Activated CD8-positive, alpha-beta T cell treated with anti-CD3 and anti-CD28 coated beads for 36 hours (primary cell): ENCODE measurements at regions of chr11 and their contacts with region 1.

Region 1: DNA sequence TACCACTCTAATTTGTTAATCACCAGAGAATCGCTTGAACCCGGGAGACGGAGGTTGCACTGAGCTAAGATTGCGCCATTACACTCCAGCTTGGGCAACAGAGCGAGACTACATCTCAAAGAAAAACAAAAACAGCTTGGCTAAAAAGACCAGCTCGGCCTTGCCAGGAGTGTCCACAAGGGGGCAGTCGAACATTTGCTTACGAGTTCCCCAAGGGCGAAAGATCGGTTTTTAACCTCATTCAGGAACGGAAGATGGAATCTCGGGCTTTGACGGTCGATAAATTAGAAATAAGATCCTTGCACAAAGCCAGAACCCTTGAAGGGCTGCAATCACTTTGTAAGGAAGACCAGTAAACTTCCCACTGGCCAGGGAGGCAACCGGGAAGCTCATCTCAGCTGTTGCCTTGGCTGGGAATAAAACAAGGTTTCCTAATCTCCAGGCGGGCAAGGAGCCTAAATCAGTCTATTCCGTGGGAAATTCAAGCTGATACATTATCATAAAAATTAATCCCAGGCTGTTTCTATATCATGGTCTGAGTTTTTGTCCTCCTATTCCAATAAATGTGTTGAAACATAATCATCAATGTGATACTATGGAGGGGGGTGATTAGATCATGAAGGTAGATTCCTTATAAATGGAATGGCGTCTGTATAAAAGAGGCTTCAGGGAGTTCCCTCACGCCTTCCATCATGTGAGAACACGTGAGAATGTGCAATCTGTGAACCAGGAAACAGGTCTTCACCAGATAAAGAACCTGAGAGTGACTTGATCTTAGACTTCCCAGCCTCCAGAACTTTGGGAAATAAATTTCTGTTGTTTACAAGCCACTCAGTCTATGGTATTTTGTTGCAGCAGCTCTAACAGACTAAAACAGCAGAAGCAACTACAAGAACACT is 14.9 kb upstream of the SLC29A2 start:
- DNase-seq: peak; percentile 95
- ATAC-seq: peak; percentile 80
- H3K4me3 Mint-ChIP-seq: peak overlapping the region; percentile 18
- H3K27ac Mint-ChIP-seq: no peak overlapping the region
- H3K4me1 Mint-ChIP-seq: peaks cover 4% of the 10 kb centered on the region
- H3K27me3 Mint-ChIP-seq: no peaks in the 10 kb centered on the region
- CTCF ChIP-seq: peak; percentile 87

Region 2: GRCh38 chr11:66268283-66268951 is 118.0 kb before region 1 on chr11 and contains the start of gene RAB1B:
- CTCF ChIA-PET with region 1: no interaction called
- POLR2A ChIA-PET with region 1: no interaction called
- intact Hi-C with region 1: no loop called
- DNase-seq: peak; percentile 100
- ATAC-seq: peak; percentile 87
- H3K4me3 Mint-ChIP-seq: peak within 1 kb of the TSS; percentile 91
- H3K27ac Mint-ChIP-seq: peak within 1 kb of the TSS; percentile 98
- H3K4me1 Mint-ChIP-seq: peaks cover 29% of the 10 kb centered on the region
- H3K27me3 Mint-ChIP-seq: no peaks in the 10 kb centered on the region
- CTCF ChIP-seq: no peak
- total RNA-seq, gene RAB1B: 97.9 to 98.2 TPM

Region 3: DNA sequence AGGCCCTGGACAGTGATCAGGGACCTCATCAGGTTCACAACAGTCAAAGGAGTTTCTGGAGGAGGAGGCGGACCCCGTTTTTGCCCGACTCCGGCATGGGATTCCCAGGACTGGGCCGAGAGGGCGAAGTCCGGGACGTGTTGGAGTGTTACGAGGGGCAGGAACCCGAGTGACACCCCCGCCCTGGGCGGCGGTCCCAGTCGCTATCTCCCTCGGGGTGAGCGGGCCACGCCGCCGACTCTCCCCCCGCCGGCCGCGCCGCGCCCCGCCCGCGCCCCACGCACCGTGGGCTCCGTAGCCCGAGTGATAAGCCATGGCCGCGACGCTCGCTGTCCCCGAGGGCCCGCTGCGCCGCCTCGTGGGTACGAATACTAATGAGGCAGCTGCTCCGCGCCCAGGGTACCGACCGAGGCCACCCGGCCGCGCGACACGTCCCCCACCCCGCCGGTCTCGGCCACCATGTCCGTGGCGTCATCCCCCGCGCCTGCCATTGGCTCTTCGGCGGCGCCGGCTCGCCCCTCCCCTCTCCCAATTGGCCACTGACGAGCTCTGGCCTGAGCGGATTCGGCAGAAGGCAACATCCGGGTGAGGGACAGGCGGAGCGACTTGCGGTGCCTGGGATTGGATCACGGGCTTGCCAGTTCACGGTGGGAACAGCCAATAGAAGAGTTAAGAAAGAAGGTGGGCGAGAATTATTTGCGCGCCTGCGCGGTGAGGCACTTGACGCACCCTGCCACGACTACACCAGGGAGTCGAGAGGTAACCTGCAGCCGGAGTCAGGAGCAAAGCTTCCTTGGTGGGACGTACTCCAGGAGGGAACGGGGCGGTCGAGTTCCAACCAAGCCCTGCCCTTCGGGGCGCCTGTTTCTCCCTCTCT is 97.5 kb before region 1 on chr11 and contains the start of gene YIF1A:
- CTCF ChIA-PET with region 1: interaction called, 14 read pairs
- POLR2A ChIA-PET with region 1: no interaction called
- intact Hi-C with region 1: no loop called
- DNase-seq: peak; percentile 99
- ATAC-seq: peak; percentile 96
- H3K4me3 Mint-ChIP-seq: peak within 1 kb of the TSS; percentile 85
- H3K27ac Mint-ChIP-seq: peak within 1 kb of the TSS; percentile 89
- H3K4me1 Mint-ChIP-seq: peaks cover 31% of the 10 kb centered on the region
- H3K27me3 Mint-ChIP-seq: peaks cover 17% of the 10 kb centered on the region
- CTCF ChIP-seq: no peak
- total RNA-seq, gene YIF1A: 57.4 to 64.0 TPM

Region 4: DNA sequence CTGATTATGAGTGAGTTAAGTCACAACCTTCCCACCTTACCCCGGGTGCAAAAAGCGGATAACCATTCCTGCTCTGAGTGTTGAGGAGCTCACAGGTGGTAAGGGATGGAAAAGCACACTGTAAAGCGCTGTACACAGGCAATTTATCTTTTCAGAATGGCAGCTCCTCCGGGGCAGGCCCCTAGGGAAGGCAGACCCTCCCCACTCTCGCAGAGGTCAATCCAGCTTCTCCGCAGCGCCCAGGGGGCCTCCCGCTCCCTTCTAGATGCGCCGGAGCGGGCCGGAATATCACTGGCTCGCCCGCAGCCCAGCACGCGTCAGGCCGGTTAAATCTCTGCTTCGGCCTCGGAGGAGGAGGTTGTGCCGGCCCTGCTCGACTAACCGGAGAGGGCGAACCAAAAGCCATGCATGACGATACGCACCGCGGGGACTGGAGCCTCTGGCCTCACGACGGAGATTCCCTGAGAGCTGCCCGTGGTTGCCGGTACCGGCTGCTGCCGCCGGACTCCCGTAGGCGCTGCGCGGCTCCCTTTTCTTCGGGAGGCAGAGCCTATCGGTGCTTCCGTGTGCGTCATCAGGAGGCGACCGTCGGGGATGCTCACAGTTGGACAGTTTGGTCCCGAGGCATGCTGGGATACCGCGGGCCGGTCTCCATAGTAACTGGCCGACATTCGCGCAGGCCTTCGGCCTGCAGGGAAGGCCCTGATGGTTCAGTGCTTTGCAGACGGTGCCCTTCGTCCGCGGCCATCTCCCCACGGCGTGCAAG is 41.7 kb before region 1 on chr11 and contains the start of gene BRMS1:
- CTCF ChIA-PET with region 1: interaction called, 22 read pairs
- POLR2A ChIA-PET with region 1: interaction called, 4 read pairs
- intact Hi-C with region 1: no loop called
- DNase-seq: peak; percentile 99
- ATAC-seq: peak; percentile 78
- H3K4me3 Mint-ChIP-seq: peak within 1 kb of the TSS; percentile 95
- H3K27ac Mint-ChIP-seq: peak within 1 kb of the TSS; percentile 92
- H3K4me1 Mint-ChIP-seq: peaks cover 43% of the 10 kb centered on the region
- H3K27me3 Mint-ChIP-seq: peaks cover 2% of the 10 kb centered on the region
- CTCF ChIP-seq: peak; percentile 14
- total RNA-seq, gene BRMS1: 35.7 to 35.9 TPM

Region 5: GRCh38 chr11:66371627-66372415 is 14.6 kb before region 1 on chr11 and contains the start of gene SLC29A2:
- CTCF ChIA-PET with region 1: interaction called, 84 read pairs
- POLR2A ChIA-PET with region 1: interaction called, 5 read pairs
- intact Hi-C with region 1: no loop called
- DNase-seq: peak; percentile 91
- ATAC-seq: peak; percentile 91
- H3K4me3 Mint-ChIP-seq: peak within 1 kb of the TSS; percentile 85
- H3K27ac Mint-ChIP-seq: peak within 1 kb of the TSS; percentile 90
- H3K4me1 Mint-ChIP-seq: peaks cover 24% of the 10 kb centered on the region
- H3K27me3 Mint-ChIP-seq: no peaks in the 10 kb centered on the region
- CTCF ChIP-seq: no peak
- total RNA-seq, gene SLC29A2: 11.8 to 12.2 TPM

Region 6: DNA sequence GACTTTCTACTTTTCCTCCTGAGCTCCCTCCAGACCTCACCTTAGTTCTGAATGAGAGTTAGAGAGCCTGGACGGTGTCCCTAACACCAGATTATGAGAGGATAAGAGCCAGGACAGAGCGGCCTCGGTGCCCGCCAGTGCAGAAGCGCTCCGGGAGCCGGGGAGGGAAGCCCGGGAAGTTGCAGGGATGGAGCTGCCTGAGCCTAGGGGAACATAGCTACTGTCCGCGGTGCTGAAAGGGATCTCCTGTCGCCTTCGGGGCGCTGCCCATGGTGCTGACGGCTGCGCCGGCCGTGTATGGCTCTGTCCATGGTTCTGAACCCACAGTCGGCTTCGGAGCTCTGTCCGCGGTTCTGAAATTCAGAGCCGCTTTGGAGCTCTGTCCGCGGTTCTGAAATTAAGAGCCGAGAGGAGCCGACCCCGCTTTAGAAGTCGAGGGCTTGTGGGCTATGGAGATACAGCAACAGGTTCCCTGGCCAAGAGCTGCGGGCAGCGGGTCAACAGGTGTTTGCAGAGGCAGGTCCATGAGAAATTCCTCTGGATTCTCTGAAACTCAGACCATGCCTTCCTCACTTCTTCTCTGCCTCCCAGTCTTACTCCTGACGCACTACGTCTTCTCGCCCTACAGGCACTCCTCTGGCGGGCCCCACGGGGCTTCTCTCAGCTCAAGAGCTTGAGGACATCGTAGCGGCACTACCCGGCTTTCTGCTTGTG is 35.2 kb after region 1 on chr11:
- CTCF ChIA-PET with region 1: interaction called, 22 read pairs
- POLR2A ChIA-PET with region 1: interaction called, 3 read pairs
- intact Hi-C with region 1: no loop called
- DNase-seq: peak; percentile 92
- ATAC-seq: peak; percentile 82
- H3K4me3 Mint-ChIP-seq: no peak overlapping the region
- H3K27ac Mint-ChIP-seq: no peak overlapping the region
- H3K4me1 Mint-ChIP-seq: peaks cover 28% of the 10 kb centered on the region
- H3K27me3 Mint-ChIP-seq: peaks cover 35% of the 10 kb centered on the region
- CTCF ChIP-seq: no peak